Posterior cingulate gyrus (tissue), 11 donors: ENCODE measurements at regions of chr7 and their contacts with region 1.

Region 1: GRCh38 chr7:28921822-28922221 is 36.3 kb downstream of the TRIL start:
- DNase-seq: peak in 7 of 10 donors; percentile 18 to 90 (median 52)

Region 2: GRCh38 chr7:28389504-28390395 is 532.1 kb before region 1 on chr7:
- intact Hi-C with region 1: loop called (anchors 1 kb)
- DNase-seq: no peak

Region 3: DNA sequence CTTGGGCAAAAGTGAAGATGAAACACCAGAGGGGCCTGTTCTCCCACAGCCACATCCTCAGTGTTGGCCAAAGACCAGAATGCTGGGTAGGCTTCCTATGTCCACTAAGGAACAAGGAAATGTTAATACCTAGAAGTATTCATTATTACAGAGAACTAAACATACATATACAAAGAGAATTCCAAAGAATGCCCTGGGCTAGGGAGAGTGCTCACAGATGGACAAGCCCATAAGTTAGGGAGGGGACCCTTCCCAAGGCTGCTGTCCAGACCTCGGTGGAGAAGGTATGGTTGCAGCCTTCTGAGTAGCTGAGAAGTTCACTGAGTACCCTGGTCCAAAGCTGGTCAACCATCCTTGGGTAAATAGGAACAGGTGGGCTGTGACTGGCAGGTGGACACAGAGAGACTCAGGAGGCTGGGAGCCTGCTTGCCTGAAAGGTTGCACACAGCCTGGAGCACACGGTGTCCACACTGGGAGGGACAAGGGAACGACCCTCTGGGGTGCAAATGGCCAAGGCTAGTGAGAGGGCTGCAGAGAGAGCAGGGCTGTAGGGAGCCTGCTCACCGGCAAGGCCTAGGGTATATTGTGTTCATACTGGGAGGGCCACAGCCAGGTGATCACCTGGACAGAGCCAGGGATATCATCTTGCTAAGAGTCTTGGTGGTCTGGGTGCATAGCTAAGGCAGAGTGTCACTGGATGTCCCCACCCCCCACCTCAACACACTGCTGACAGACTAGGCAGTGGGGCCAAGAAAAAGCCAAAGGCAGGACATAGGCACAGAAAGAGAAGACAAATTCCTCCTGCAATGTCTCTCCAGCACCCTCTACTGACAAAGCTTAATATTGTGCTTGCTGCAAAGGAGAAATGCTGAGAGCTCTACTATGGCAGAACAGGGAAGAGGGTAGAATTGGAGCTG is 184.2 kb after region 1 on chr7:
- intact Hi-C with region 1: loop called (anchors 1 kb)
- DNase-seq: peak in 2 of 10 donors; percentile 22 to 26

Region 4: GRCh38 chr7:29189743-29190201 is 267.9 kb after region 1 on chr7:
- intact Hi-C with region 1: loop called (anchors 5 kb)
- DNase-seq: peak; percentile 49 to 94 (median 72)

Region 5: DNA sequence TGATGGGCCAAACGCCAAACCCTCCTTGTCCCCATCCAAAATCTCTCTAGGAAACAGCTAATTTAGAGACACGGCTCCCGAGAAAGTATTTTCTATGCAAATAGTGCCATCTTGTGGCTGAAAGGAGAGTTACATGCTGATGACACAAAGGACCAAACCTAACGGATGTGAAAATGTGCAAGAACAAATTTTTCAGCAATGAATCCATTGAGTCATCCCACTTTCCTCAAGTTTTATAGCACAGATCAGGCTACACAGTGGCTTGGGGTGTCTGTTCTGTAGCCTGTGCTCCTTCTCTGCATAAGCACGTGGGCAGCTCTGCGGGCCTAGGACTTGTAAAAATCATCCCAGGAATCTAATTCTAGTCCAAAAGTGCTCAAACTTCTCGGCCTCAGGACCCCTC is 487.0 kb after region 1 on chr7:
- intact Hi-C with region 1: loop called (anchors 1 kb)
- DNase-seq: peak in 3 of 10 donors; percentile 37 to 55 (median 54)